ENCODE measurements at regions of chr14 and their contacts with region 1.

Region 1: DNA sequence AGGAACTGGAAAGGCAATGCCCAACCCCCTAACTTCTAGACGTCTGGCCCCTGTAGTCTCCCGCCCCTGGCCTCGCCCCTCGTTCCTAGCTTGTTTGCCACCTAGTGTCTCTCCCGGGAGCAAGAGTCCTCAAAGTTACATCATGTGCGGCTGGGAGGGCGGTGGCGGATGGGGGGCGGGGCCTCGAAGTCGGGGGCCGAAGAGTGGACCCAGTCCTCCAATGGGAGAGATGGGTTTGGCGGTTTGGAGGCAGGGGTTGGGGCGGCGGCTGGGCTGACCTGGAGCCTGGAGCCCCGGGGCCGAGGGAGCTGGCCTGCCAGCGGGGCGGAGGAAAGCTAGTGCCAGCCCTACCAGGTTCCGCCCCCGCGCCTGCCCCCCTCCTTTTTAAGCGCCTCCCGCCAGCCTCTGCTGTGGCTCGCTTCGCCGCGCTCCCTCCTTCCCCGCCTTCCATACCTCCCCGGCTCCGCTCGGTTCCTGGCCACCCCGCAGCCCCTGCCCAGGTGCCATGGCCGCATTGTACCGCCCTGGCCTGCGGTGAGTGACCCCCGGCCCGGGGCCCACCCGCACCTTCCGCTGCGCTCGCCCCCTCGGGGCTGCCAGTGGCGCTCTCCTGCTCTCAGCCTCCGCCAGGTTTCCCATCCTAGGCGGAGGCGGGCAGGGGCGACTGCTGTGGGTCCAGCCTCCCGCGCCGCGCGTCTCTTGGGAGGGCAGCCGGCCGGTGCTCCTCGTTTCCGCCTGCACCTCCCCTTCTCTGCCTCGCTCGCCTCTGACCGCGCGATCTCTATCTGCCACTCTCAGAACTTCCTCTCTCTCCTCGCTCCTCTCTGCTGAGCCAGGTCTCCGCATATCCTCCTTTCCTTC is at the start of gene PCK2:
- DNase-seq: peak; percentile 95
- ATAC-seq: peak; percentile 87
- H3K4me3 Mint-ChIP-seq: peak within 1 kb of the TSS; percentile 85
- H3K27ac Mint-ChIP-seq: peak within 1 kb of the TSS; percentile 95
- H3K4me1 Mint-ChIP-seq: peaks cover 26% of the 10 kb centered on the region
- H3K27me3 Mint-ChIP-seq: no peaks in the 10 kb centered on the region
- total RNA-seq, gene PCK2: 101 to 115 TPM

Region 2: DNA sequence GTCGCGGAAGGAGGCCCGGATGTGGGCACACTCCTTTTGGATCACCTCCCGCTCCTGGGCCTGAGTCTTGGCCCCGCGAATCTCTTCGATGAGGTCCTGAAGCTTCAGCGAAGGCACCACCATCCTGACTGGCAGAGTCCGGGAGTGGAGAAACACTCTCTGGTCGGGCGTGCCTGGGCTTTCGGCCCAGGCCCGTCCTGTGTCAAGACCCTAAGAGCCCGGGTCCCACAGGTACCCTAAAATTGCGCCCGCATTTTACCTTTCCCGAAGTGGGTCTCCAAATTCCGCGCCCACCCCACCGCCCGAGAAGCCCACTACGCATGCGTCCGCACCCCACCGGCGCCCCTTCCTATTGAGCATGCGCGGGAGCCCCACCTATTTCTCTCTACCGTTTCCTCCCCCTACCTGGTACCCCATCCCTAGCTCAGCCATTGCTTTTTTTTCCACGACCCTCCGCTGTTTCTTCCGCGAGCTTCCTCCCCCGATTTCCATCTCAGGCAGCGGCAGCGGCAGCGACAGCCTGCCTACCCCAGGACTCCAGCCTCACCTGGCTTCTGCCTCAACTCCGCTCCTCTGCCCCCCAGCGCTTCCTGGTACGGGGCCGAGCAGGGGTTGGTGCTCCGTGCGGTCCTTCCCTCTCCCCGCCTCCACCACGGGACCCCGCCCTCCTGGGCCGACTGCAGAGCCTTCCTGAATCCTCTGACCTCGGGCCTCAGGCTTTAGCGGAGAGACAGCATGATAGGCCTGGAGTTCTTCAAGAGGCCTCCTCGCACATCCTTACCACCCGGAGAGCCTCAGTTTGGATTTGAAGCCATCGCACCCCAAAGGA is 526.7 kb before region 1 on chr14 and contains the start of gene AP1G2:
- CTCF ChIA-PET with region 1: no interaction called
- POLR2A ChIA-PET with region 1: no interaction called
- intact Hi-C with region 1: loop called in 1 of 2 experiments (anchors 2 kb)
- DNase-seq: peak; percentile 95
- ATAC-seq: peak; percentile 96
- H3K4me3 Mint-ChIP-seq: peak within 1 kb of the TSS; percentile 92
- H3K27ac Mint-ChIP-seq: peak within 1 kb of the TSS; percentile 95
- H3K4me1 Mint-ChIP-seq: peaks cover 23% of the 10 kb centered on the region
- H3K27me3 Mint-ChIP-seq: peaks cover 5% of the 10 kb centered on the region
- total RNA-seq, gene AP1G2: 162 to 166 TPM

Region 3: DNA sequence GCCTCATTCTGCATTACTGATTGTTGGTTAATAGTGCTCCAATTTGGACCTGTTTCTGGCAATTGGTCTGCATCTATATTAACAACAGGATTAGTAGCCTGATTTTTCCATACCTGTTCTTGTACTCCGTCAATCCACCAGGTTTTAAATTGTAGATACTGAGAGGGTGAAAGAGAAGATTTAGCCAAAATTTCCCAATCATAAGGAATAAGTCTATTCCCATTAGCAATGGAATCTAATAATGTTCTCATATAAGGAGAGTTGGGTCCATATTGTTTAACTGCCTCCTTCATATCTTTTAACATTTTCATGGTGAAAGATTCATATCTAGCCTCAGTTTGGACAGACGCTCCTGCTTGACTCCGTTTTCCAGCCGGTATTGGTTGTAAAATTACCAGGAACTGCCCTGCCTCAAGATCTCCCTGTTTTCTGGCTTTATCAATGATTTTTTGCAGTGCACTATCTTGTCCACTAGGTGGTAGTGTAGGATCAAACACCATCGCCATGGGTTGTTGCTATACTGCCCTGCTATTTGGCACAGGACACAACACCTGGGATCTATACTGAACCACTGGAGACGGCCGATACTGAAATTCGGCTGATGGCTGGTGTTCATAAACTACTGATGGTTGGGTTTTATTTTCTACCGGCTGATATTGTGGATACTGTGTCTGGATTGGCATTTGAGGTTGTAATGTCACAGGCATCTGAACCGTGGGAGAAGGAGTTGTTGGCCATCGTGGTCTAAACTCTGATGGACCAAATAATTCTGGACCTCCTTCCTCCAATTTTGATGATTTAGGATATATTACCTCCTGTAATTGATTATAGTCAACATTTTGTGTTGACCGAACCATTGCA is 80.2 kb before region 1 on chr14:
- CTCF ChIA-PET with region 1: interaction called, 7 read pairs
- POLR2A ChIA-PET with region 1: no interaction called
- intact Hi-C with region 1: loop called (anchors 1 kb)
- DNase-seq: peak; percentile 63
- ATAC-seq: peak; percentile 98
- H3K4me3 Mint-ChIP-seq: no peak overlapping the region
- H3K27ac Mint-ChIP-seq: no peak overlapping the region
- H3K4me1 Mint-ChIP-seq: peaks cover 23% of the 10 kb centered on the region
- H3K27me3 Mint-ChIP-seq: no peaks in the 10 kb centered on the region

Region 4: DNA sequence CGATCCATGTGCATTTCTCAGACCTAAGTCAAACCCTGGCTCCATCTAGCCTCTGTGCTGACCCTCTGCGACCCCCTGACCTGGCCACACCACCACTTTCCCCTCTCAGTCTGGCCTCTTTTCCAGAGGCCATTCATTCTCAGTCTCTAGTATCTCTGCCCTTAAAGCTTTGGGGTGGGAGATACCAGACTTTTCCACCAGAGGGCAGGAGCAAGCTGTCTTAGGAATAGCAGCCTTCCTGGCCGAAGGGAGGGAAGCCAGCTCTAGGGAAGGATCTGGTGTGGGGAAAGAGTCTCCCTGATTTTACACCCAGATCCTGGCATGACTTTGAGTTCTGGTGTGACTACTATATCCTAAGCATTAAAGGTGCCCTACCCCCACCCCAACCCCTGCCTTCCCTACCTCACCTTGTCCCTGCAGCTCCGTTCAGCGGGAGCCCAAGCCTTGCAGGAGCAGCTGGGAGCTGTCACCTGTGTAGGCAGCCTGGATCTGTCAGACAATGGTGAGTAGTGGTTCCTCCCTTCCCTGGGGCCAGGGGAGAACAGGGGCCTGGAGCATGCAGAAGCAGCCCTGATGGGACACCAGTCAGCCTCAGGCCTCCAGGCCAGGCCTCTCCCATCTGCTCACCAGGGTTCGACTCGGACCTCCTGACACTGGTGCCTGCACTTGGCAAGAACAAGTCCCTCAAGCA is 35.7 kb before region 1 on chr14:
- CTCF ChIA-PET with region 1: interaction called, 124 read pairs
- POLR2A ChIA-PET with region 1: interaction called, 3 read pairs
- intact Hi-C with region 1: loop called (anchors 1 kb)
- DNase-seq: peak; percentile 73
- ATAC-seq: peak; percentile 63
- H3K4me3 Mint-ChIP-seq: no peak overlapping the region
- H3K27ac Mint-ChIP-seq: peak overlapping the region; percentile 40
- H3K4me1 Mint-ChIP-seq: peaks cover 4% of the 10 kb centered on the region
- H3K27me3 Mint-ChIP-seq: peaks cover 2% of the 10 kb centered on the region

Region 5: GRCh38 chr14:24080888-24081738 is 13.0 kb before region 1 on chr14:
- CTCF ChIA-PET with region 1: interaction called, 83 read pairs
- POLR2A ChIA-PET with region 1: interaction called, 12 read pairs
- intact Hi-C with region 1: loop called (anchors 1 kb)
- DNase-seq: peak; percentile 84
- ATAC-seq: peak; percentile 92
- H3K4me3 Mint-ChIP-seq: peak overlapping the region; percentile 68
- H3K27ac Mint-ChIP-seq: peak overlapping the region; percentile 45
- H3K4me1 Mint-ChIP-seq: peaks cover 20% of the 10 kb centered on the region
- H3K27me3 Mint-ChIP-seq: no peaks in the 10 kb centered on the region

Region 6: GRCh38 chr14:24123508-24124417 is 29.6 kb after region 1 on chr14:
- CTCF ChIA-PET with region 1: no interaction called
- POLR2A ChIA-PET with region 1: no interaction called
- intact Hi-C with region 1: no loop called
- DNase-seq: no peak
- ATAC-seq: no peak
- H3K4me3 Mint-ChIP-seq: no peak overlapping the region
- H3K27ac Mint-ChIP-seq: no peak overlapping the region
- H3K4me1 Mint-ChIP-seq: peaks cover 2% of the 10 kb centered on the region
- H3K27me3 Mint-ChIP-seq: no peaks in the 10 kb centered on the region

Region 7: GRCh38 chr14:24135834-24136542 is 41.9 kb after region 1 on chr14 and contains the start of gene PSME1:
- CTCF ChIA-PET with region 1: interaction called, 4 read pairs
- POLR2A ChIA-PET with region 1: interaction called, 6 read pairs
- intact Hi-C with region 1: loop called in 1 of 2 experiments (anchors 1 kb)
- DNase-seq: peak; percentile 98
- ATAC-seq: peak; percentile 95
- H3K4me3 Mint-ChIP-seq: peak within 1 kb of the TSS; percentile 92
- H3K27ac Mint-ChIP-seq: peak within 1 kb of the TSS; percentile 92
- H3K4me1 Mint-ChIP-seq: peaks cover 50% of the 10 kb centered on the region
- H3K27me3 Mint-ChIP-seq: no peaks in the 10 kb centered on the region
- total RNA-seq, gene PSME1: 414 to 418 TPM

Region 8: DNA sequence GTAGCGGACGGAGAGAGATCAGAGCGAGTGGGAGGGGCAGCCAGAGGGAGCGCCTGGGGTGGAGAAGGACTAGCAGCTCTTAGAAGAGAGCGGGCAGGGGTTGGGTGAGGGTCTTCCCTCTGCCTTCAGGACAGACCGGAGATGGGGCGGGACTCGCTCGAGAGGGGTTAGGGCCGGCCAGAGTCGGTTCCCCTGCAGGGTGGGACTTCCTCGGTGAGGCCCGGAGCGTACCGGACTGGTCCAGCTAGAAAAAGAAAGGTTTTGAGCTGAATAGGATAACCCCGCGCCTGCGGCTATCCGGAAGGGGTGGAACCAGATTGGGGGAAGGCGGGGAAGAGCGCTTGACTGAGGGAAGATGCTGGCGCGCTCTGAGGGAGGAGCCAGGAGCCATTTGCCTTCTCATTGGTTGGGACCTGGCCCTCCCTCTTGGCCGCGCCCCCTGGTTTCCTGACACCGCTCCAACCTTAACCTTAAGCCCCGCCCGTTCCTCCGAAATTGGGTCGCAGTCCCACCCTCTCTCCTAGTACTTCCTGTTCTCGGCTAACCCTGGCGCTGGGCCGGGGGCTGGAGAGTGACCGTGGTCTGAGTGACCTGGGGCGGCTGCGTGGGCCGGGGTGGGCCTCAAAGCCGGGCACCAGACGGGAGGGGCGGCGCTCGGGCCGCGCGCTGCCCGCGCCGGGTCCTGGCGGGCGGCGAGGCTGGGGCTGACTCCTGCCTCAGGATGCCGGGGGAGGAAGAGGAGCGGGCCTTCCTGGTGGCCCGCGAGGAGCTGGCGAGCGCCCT is 53.0 kb after region 1 on chr14 and contains the start of gene RNF31:
- CTCF ChIA-PET with region 1: interaction called, 3 read pairs
- POLR2A ChIA-PET with region 1: interaction called, 6 read pairs
- intact Hi-C with region 1: loop called in 1 of 2 experiments (anchors 1 kb)
- DNase-seq: peak; percentile 99
- ATAC-seq: peak; percentile 89
- H3K4me3 Mint-ChIP-seq: peak within 1 kb of the TSS; percentile 94
- H3K27ac Mint-ChIP-seq: peak within 1 kb of the TSS; percentile 97
- H3K4me1 Mint-ChIP-seq: peaks cover 57% of the 10 kb centered on the region
- H3K27me3 Mint-ChIP-seq: no peaks in the 10 kb centered on the region
- total RNA-seq, gene RNF31: 73.7 to 98.4 TPM

Measured in activated CD4-positive, alpha-beta T cell treated with anti-CD3 and anti-CD28 coated beads for 36 hours (primary cell).